Transverse colon (tissue), 4 donors: ENCODE measurements at regions of chr1 and their contacts with region 1.

Region 1: DNA sequence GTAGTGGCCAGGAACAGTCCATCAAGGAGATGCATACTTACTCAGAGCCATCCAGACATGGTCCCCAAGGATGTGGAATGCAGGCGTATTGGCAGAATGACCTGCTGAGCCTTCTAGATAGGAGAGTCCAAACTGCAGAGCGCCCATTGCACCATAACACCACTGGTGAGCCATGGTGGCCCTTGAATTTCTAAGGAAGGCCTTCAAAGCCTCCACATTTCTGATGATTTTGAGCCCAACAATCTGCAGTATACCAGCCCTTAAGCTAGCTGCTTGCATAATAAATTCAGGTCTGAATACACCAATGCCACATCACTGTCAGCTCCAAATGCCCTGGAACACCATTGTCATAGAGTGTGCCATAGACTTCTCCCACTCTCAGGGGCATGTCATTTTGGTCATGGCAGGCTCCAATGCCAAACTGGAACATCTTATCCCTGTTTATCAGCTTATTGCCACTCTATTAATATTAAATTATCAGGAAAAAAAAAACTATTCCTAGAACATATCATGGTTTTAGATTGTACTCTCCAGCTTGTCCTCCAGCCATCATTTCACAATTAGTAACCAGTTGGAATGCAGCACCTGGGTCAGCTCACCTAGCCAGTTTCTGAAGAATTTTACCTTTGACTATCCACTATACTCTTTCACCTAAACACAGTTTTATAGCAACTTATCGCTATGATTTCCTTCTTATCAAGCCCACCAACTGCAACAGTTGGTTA is 26.9 kb downstream of the NPHS2 start:
- DNase-seq: no peak
- H3K4me3 ChIP-seq: no peak overlapping the region
- H3K27ac ChIP-seq: no peak overlapping the region
- H3K4me1 ChIP-seq: no peaks in the 10 kb centered on the region
- H3K27me3 ChIP-seq: no peaks in the 10 kb centered on the region
- CTCF ChIP-seq: no peak
- EP300 ChIP-seq: no peak
- POLR2A ChIP-seq: no peak

Region 2: GRCh38 chr1:179310721-179311120 is 238.1 kb before region 1 on chr1:
- in situ Hi-C with region 1: no loop called
- intact Hi-C with region 1: no loop called
- DNase-seq: no peak
- H3K4me3 ChIP-seq: no peak overlapping the region
- H3K27ac ChIP-seq: peak overlapping the region in 1 of 4 donors; percentile 14
- H3K4me1 ChIP-seq: no peaks in the 10 kb centered on the region
- H3K27me3 ChIP-seq: no peaks in the 10 kb centered on the region
- CTCF ChIP-seq: no peak
- EP300 ChIP-seq: no peak
- POLR2A ChIP-seq: no peak

Region 3: GRCh38 chr1:179516976-179517705 is 31.7 kb before region 1 on chr1:
- in situ Hi-C with region 1: no loop called
- intact Hi-C with region 1: loop called (anchors 1 kb)
- DNase-seq: peak; percentile 44
- H3K4me3 ChIP-seq: peak overlapping the region in 2 of 4 donors; percentile 1 to 3
- H3K27ac ChIP-seq: peak overlapping the region; percentile 30 to 71 (median 58)
- H3K4me1 ChIP-seq: peaks cover 0 to 6% (median 0%) of the 10 kb centered on the region in 4 donors
- H3K27me3 ChIP-seq: no peaks in the 10 kb centered on the region
- CTCF ChIP-seq: no peak
- EP300 ChIP-seq: no peak
- POLR2A ChIP-seq: no peak